ENCODE measurements at regions of chr9 and their contacts with region 1.

Region 1: DNA sequence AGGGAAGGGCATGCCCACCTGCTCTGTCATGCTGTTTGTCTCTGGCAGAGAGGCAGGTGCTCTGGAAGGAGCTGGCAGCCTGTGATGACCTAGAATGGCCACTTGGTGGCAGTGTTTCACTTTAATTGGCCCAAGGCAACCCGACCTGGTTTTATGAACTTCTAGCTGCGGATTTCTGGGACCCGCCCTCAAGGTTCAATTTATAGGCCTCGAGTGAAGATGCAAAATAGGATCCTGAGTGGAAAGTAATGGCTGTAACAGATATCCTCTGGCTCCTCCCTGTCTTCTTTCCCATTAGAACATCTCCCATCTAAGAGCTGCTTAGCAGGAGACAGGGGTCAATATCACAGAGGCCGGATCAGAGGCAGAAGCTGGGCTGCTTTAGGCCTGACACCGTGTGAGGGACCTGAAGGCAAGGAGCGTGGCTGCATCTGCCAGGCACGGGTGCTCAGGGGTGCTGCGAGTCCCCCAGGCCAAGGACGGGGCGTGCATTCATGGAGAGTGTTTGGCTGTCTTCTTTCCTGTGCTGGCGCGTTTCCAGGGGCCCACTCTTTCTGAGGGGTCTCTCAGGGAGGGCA is 56.7 kb upstream of the SLC28A3 start:
- DNase-seq: peak; percentile 44
- H3K4me3 Mint-ChIP-seq: no peak overlapping the region
- H3K27ac Mint-ChIP-seq: no peak overlapping the region
- H3K4me1 Mint-ChIP-seq: no peaks in the 10 kb centered on the region
- H3K27me3 Mint-ChIP-seq: no peaks in the 10 kb centered on the region

Region 2: DNA sequence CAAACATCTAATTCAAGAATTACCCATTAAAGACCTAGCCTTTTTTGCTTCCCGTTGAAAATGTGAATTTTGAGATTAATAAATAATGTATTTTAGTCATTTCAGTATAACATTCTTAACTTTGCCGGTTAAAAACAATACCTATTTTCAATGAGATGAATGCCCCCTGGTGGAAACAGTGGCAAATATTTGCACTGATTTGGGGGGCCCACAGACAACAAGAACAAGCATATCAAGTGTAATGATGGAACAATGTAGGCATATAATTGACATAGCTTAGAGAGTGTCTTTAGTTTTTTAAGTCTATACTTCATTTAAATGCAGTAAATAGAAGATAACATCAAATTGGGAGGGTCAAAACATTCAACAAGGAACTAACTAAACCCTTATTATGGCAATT is 384.2 kb after region 1 on chr9:
- intact Hi-C with region 1: loop called (anchors 10 kb)
- DNase-seq: no peak
- H3K4me3 Mint-ChIP-seq: no peak overlapping the region
- H3K27ac Mint-ChIP-seq: no peak overlapping the region
- H3K4me1 Mint-ChIP-seq: no peaks in the 10 kb centered on the region
- H3K27me3 Mint-ChIP-seq: peaks cover 6% of the 10 kb centered on the region

Region 3: DNA sequence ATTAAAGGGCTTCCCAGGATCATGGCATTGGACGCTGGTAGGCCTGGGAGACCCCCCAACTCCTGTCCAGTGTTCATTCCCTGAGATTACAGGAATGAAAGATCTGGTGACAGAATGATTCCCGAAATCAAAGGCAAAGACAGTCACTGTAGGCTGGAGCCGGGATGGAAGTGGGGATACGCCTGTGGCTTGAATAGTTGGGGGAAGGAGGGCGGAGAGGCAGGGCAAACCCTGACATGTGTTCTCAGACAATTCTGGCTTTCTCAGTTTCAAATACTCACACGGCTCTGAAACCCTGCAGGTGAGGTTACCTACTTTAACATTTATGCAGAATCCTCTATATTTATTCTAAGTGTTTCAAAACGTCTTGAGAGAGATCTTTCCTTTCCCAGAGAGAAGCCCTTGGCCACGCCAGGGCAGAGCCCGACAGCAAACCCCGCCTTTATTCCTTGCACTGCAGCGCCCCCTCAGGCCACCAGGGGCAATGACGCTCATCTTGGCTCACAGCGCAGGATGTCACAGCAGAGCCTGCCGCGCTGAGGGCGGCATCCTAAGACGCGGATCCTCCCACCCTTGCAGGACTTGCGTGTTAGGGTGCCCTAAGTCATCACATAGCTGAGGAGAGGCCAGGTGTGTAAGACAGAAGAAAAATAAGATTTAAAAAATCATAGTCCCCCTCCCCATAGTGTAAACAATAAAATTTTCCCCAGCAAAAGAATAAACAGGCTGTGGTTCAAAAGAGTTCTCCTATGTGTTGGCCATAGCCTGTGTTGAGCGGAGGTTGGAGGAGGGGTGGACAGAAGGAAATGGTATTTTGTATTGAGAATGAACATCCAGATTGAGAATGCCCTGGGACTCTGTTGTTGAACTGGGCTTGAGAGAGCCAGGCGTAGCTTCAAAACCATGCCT is 556.8 kb after region 1 on chr9:
- intact Hi-C with region 1: loop called (anchors 10 kb)
- DNase-seq: peak; percentile 47
- H3K4me3 Mint-ChIP-seq: no peak overlapping the region
- H3K27ac Mint-ChIP-seq: no peak overlapping the region
- H3K4me1 Mint-ChIP-seq: no peaks in the 10 kb centered on the region
- H3K27me3 Mint-ChIP-seq: peaks cover 3% of the 10 kb centered on the region

Region 4: GRCh38 chr9:85142968-85143367 is 745.7 kb after region 1 on chr9:
- intact Hi-C with region 1: loop called (anchors 5 kb)
- DNase-seq: no peak
- H3K4me3 Mint-ChIP-seq: no peak overlapping the region
- H3K27ac Mint-ChIP-seq: no peak overlapping the region
- H3K4me1 Mint-ChIP-seq: no peaks in the 10 kb centered on the region
- H3K27me3 Mint-ChIP-seq: no peaks in the 10 kb centered on the region

Region 5: DNA sequence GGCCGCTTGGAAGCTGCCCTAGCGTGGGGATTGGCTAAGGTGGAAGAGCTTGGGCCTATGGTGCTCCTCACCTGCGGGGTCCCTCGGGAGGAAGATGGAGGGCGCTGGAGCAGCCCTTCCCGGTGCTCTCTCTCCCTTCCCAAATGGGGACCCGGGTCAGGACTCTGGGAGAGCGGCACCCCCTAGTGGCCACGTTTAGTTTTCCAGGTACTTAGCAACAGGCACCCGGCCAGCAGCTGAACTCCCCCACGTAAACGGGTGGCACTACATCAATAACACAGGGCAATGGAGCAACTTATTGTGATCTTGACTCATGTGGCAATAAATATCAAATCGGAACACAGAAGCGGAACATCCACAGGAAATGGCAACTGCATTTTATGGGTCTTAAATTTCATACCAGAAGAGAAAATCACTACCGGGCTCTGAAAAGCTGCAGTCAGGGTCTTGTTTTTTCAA is 1027.9 kb after region 1 on chr9:
- intact Hi-C with region 1: loop called (anchors 10 kb)
- DNase-seq: peak; percentile 43
- H3K4me3 Mint-ChIP-seq: no peak overlapping the region
- H3K27ac Mint-ChIP-seq: no peak overlapping the region
- H3K4me1 Mint-ChIP-seq: peaks cover 5% of the 10 kb centered on the region
- H3K27me3 Mint-ChIP-seq: peaks cover 7% of the 10 kb centered on the region

Region 6: GRCh38 chr9:85610074-85610860 is 1213.0 kb after region 1 on chr9:
- intact Hi-C with region 1: loop called (anchors 5 kb)
- DNase-seq: no peak
- H3K4me3 Mint-ChIP-seq: peak overlapping the region; percentile 51
- H3K27ac Mint-ChIP-seq: peak overlapping the region; percentile 63
- H3K4me1 Mint-ChIP-seq: peaks cover 6% of the 10 kb centered on the region
- H3K27me3 Mint-ChIP-seq: no peaks in the 10 kb centered on the region

Measured in activated T-helper 2 cell treated with anti-CD3 and anti-CD28 coated beads, Interferon-gamma antibody, Interleukin-2, Interleukin-4, amounts not matched to agents 10 μg/mL and 5 μg/mL and 100 μg/mL, durations not matched to agents 14 hours and 24 hours and 36 hours (primary cell).